Mammary epithelial cell (primary cell): ENCODE measurements at regions of chr12 and their contacts with region 1.

Region 1: DNA sequence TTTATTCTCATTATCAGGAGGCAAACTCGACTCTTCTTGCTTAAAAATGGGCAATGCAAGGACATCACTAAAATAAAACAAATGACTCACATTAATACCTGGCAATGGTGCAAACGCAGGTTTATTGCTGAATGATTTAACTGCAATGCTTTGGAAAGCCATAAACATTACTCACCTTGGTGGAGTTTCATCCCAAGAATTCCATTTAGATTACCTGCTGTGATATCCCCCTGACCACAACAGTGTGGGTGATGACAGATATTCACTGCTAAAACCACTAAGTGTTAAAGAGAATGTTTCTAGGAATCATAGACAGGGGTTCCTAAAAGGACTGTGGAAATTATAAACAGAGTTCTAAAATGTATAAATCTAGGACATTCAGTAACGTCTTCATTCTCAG is 35.3 kb upstream of the CSRNP2 start:
- DNase-seq: peak; percentile 97
- H3K4me3 ChIP-seq: no peak overlapping the region
- H3K27ac ChIP-seq: peak overlapping the region; percentile 40
- H3K4me1 ChIP-seq: peaks cover 13% of the 10 kb centered on the region
- H3K27me3 ChIP-seq: no peaks in the 10 kb centered on the region
- CTCF ChIP-seq: no peak

Region 2: DNA sequence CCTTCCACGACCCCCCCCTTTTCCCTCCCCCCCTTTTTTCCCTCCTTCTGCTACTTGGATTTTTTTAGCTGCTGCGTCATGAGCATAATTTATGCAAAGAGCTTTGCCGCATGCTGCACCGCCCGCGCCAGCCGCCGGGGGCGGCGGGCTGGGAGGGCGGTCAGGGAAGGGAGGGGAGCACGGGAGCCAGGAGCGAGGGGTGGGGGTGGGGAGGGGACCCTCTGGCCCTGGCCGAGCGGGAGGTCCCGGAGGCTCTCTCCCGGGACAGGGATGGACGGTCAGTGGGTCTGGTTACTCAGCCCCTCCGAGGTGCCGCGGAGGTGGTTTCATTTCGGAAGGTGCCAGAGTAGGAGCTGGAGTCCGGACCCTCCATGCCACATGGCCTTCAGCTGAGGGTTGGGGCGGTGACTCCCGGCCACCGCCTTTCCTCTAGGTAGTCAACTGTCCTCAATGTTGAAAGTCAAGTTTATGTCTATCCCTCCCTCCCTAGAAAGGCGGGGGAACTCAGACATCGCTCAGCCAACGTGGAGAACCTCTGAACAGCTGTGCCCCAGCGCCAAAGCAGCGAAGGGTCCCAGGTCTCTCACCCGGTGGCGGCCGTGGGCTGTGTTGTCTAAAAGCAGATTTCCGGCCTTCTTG is 99.4 kb after region 1 on chr12 and contains the start of gene POU6F1:
- CTCF ChIA-PET with region 1: no interaction called
- dilution Hi-C with region 1: no loop called
- in situ Hi-C with region 1: no loop called
- intact Hi-C with region 1: loop called (anchors 2 kb)
- DNase-seq: peak; percentile 61
- H3K4me3 ChIP-seq: peak within 1 kb of the TSS; percentile 55 to 86 (median 66)
- H3K27ac ChIP-seq: peak within 1 kb of the TSS; percentile 25
- H3K4me1 ChIP-seq: peaks cover 10% of the 10 kb centered on the region
- H3K27me3 ChIP-seq: no peaks in the 10 kb centered on the region
- CTCF ChIP-seq: peak; percentile 33 to 64
- total RNA-seq, gene POU6F1: 2.6 to 3.5 TPM

Region 3: DNA sequence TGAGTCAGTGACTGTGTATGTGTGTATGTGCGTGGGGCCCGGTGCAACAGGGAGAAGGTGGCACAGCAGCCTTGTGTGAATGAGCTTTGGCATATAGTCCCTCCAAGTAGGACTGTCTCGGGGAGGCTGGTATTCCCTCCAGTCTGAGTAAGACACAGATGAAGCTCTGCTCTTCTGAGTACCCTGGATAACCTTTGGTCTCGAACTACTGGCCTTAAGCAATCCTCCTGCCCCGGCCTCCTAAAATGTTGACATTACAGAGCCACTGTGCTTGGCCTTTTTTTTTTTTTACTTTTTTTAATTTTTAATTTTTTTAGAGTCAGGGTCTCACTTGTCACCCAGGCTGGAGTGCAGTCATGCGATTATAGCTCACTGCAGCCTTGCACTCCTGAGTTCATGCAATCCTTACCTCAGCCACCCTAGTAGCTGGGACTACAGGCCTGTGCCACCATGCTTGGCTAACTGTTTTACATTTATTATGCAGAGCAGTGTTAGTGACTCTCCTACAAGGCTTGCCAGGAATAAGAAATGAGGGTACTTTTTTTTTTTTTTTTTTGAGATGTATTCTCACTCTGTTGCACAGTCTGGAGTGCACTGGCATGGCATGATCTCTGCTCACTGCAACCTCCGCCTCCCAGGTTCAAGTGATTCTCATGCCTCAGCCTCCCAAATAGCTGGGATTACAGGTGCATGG is 110.6 kb after region 1 on chr12:
- CTCF ChIA-PET with region 1: no interaction called
- dilution Hi-C with region 1: no loop called
- in situ Hi-C with region 1: no loop called
- intact Hi-C with region 1: no loop called
- DNase-seq: no peak
- H3K4me3 ChIP-seq: no peak overlapping the region
- H3K27ac ChIP-seq: no peak overlapping the region
- H3K4me1 ChIP-seq: no peaks in the 10 kb centered on the region
- H3K27me3 ChIP-seq: no peaks in the 10 kb centered on the region
- CTCF ChIP-seq: no peak